ENCODE measurements at regions of chr15 and their contacts with region 1.

Region 1: GRCh38 chr15:76840830-76841460 is 64.2 kb downstream of the SCAPER start:
- DNase-seq: no peak
- H3K4me3 ChIP-seq: no peak overlapping the region
- H3K27ac ChIP-seq: no peak overlapping the region
- H3K4me1 ChIP-seq: no peaks in the 10 kb centered on the region
- H3K27me3 ChIP-seq: no peaks in the 10 kb centered on the region
- CTCF ChIP-seq: peak; percentile 73

Region 2: DNA sequence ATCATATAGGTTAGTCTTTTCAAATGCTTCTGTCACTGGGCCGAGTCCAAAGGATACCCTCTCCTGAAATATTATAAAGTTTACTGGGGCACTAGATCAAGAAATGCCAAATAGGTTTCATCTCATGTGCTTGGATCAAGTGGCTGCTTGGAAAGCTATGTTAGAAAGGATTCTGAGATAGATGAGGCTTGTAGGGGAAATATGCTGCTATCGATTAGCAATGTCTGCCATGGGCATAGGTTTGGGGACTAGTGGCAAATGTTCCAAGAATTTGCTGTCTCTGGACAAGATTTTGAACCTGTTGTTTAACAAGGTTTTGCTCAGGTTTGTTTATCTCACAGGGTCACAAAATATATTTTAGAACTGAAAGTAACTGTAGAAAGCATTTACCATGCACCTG is 1020.7 kb before region 1 on chr15:
- CTCF ChIA-PET with region 1: no interaction called
- POLR2A ChIA-PET with region 1: interaction called, 10 read pairs
- intact Hi-C with region 1: no loop called
- DNase-seq: no peak
- H3K4me3 ChIP-seq: no peak overlapping the region
- H3K27ac ChIP-seq: no peak overlapping the region
- H3K4me1 ChIP-seq: peaks cover 18% of the 10 kb centered on the region
- H3K27me3 ChIP-seq: no peaks in the 10 kb centered on the region
- CTCF ChIP-seq: no peak

Region 3: GRCh38 chr15:77034695-77035489 is 193.9 kb after region 1 on chr15:
- CTCF ChIA-PET with region 1: no interaction called
- POLR2A ChIA-PET with region 1: no interaction called
- intact Hi-C with region 1: no loop called
- DNase-seq: no peak
- H3K4me3 ChIP-seq: no peak overlapping the region
- H3K27ac ChIP-seq: no peak overlapping the region
- H3K4me1 ChIP-seq: no peaks in the 10 kb centered on the region
- H3K27me3 ChIP-seq: no peaks in the 10 kb centered on the region
- CTCF ChIP-seq: peak; percentile 69

Measured in PC-9 (cell line).